Esophagus muscularis mucosa (tissue), 4 donors: ENCODE measurements at regions of chr11 and their contacts with region 1.

Region 1: GRCh38 chr11:44036811-44037657 is 10.7 kb upstream of the ACCSL start:
- DNase-seq: peak; percentile 93
- H3K4me3 ChIP-seq: no peak overlapping the region
- H3K27ac ChIP-seq: peak overlapping the region in 2 of 4 donors; percentile 7 to 23
- H3K4me1 ChIP-seq: peaks cover 14 to 28% (median 22%) of the 10 kb centered on the region in 4 donors
- H3K27me3 ChIP-seq: no peaks in the 10 kb centered on the region
- CTCF ChIP-seq: peak; percentile 89 to 90 (median 89)
- EP300 ChIP-seq: no peak
- POLR2A ChIP-seq: no peak

Region 2: GRCh38 chr11:43765194-43765593 is 271.8 kb before region 1 on chr11:
- intact Hi-C with region 1: no loop called
- DNase-seq: no peak
- H3K4me3 ChIP-seq: no peak overlapping the region
- H3K27ac ChIP-seq: no peak overlapping the region
- H3K4me1 ChIP-seq: peaks cover 0 to 4% (median 0%) of the 10 kb centered on the region in 4 donors
- H3K27me3 ChIP-seq: no peaks in the 10 kb centered on the region
- CTCF ChIP-seq: no peak
- EP300 ChIP-seq: no peak
- POLR2A ChIP-seq: no peak

Region 3: DNA sequence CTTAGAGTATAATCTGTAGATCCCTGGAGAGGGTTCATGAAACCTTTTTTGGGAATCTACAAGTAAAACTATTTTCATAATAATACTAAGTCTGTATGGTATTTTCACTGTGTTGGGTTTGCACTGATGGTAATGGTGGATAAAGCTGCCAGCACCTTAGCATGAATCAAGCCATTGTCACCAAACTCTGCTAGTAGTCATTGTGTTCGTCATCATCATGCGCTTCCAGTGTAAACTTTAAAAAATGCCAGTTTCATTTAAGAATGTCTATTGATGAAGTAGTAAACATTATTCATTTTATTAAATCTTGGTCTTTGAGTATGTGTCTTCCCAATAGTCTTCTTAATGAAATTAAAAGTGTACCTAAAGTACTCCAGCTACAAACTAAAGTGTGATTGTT is 141.4 kb before region 1 on chr11:
- intact Hi-C with region 1: loop called (anchors 2 kb)
- DNase-seq: no peak
- H3K4me3 ChIP-seq: no peak overlapping the region
- H3K27ac ChIP-seq: no peak overlapping the region
- H3K4me1 ChIP-seq: no peaks in the 10 kb centered on the region
- H3K27me3 ChIP-seq: no peaks in the 10 kb centered on the region
- CTCF ChIP-seq: no peak
- EP300 ChIP-seq: no peak
- POLR2A ChIP-seq: no peak

Region 4: GRCh38 chr11:43944761-43945311 is 92.2 kb before region 1 on chr11:
- intact Hi-C with region 1: loop called (anchors 2 kb)
- DNase-seq: no peak
- H3K4me3 ChIP-seq: peak overlapping the region; percentile 63 to 78 (median 75)
- H3K27ac ChIP-seq: peak overlapping the region; percentile 86 to 93 (median 89)
- H3K4me1 ChIP-seq: peaks cover 23 to 35% (median 34%) of the 10 kb centered on the region in 4 donors
- H3K27me3 ChIP-seq: peaks cover 0 to 13% (median 0%) of the 10 kb centered on the region in 4 donors
- CTCF ChIP-seq: peak; percentile 79 to 89 (median 85)
- EP300 ChIP-seq: no peak
- POLR2A ChIP-seq: no peak

Region 5: DNA sequence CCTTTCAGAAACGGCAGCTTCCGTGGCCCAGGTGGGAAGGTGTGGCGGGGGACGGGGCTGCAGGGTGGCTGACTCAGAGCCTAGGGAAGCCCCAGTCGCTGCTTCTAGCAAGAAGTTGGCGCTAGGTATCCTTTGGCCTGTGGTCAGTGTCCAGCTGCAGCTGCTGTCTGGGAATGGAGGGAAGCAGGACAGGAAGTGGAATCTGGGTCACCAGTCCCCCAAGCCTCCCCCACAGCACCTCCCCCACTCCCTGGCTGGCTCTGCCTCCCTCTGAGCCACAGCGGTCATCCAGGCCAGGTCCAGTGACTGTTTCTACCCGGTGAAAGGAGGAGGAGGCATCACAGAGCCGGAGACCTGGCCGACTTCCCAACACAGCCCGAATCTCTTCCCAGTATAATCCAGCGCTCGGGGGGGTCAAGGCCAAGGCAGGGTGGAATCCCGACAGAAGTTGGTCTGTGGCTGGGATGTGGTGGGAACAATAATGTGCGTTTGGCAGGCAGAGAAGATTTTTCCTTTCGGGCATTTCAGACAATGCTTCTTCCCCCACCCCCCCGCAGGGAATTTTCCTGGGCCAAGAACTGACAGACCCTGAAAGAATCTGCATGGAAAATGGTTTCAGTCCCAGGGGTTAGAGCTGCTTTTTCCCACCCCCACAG is 49.5 kb before region 1 on chr11:
- intact Hi-C with region 1: loop called (anchors 5 kb)
- DNase-seq: peak; percentile 97
- H3K4me3 ChIP-seq: peak overlapping the region; percentile 6 to 22 (median 14)
- H3K27ac ChIP-seq: peak overlapping the region; percentile 59 to 78 (median 69)
- H3K4me1 ChIP-seq: peaks cover 35 to 57% (median 53%) of the 10 kb centered on the region in 4 donors
- H3K27me3 ChIP-seq: no peaks in the 10 kb centered on the region
- CTCF ChIP-seq: no peak
- EP300 ChIP-seq: peak; percentile 9
- POLR2A ChIP-seq: no peak